Activated T-helper 1 cell treated with anti-CD3 and anti-CD28 coated beads, Interleukin-12 subunit alpha, Interleukin-12 subunit beta, Interleukin-2, Interleukin-4 antibody, amounts not matched to agents 30 ng/mL and 10 ng/mL and 1 ng/mL, durations not matched to agents 14 hours and 24 hours and 36 hours (primary cell): ENCODE measurements at regions of chr11 and their contacts with region 1.

Region 1: DNA sequence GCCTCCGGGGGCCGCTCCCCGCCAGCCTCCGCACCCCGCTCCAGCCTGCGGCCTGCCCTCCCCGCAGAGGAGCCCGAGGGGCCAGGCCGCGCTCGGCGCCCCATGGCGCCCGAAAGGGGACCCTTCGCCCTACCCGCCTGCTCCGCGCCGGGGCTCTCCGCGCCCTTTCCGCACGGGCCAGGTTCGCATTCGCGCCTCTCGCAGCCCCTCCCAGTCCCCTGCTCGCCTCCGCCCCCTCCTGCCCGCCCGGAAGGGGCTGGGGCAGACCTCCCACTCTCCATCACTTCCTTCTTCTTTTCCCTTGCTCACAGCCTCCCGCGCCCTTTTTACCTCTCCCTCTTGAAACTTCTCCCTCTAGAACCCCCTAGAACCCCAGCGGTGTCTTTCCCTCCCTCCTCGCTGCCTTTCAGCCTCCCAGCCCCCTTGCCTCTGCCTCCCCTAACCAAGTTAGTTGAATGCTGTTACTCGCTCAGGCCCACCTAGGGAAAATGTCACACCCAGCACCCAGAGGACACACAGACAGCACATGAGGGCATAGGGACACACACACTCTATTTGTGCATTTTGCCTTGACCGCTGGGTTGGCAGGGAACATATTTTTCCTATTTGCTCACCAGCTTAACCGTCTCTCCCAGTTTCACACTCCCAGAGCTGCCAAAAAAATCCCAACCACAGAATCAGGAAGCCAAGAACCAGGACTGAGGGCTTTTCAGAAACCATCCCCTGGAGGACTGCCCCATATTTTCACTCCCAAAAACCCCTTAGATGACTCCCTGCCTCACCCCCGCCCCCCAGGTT is at the start of gene SLC43A3:
- DNase-seq: peak; percentile 60
- H3K4me3 Mint-ChIP-seq: peak within 1 kb of the TSS; percentile 90
- H3K27ac Mint-ChIP-seq: peak within 1 kb of the TSS; percentile 80
- H3K4me1 Mint-ChIP-seq: peaks cover 56% of the 10 kb centered on the region
- H3K27me3 Mint-ChIP-seq: peaks cover 3% of the 10 kb centered on the region
- total RNA-seq, gene SLC43A3: 181 and 184 TPM in 2 replicates

Region 2: DNA sequence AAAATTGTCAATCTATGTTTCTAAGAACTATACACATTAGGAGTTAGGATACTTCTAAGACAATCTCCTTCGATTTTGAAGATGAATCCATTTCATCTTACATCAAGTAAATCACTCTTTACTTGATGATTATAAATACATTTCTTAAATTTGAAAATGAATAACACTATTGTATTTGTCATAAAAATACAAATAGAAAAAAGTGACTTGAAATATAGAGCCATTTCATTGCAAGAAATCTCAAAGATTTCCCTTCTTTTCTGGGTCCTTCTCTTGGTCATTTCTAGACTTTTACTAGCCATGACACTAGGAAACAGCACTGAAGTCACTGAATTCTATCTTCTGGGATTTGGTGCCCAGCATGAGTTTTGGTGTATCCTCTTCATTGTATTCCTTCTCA is 438.5 kb before region 1 on chr11 and contains the start of gene OR5AK2:
- intact Hi-C with region 1: no loop called
- DNase-seq: no peak
- H3K4me3 Mint-ChIP-seq: no peak within 1 kb of the TSS
- H3K27ac Mint-ChIP-seq: no peak within 1 kb of the TSS
- H3K4me1 Mint-ChIP-seq: no peaks in the 10 kb centered on the region
- H3K27me3 Mint-ChIP-seq: no peaks in the 10 kb centered on the region
- total RNA-seq, gene OR5AK2: not detected in 2 replicates

Region 3: GRCh38 chr11:57335343-57336110 is 91.6 kb before region 1 on chr11 and contains the start of gene SSRP1:
- intact Hi-C with region 1: loop called (anchors 2 kb)
- DNase-seq: peak; percentile 81
- H3K4me3 Mint-ChIP-seq: peak within 1 kb of the TSS; percentile 92
- H3K27ac Mint-ChIP-seq: peak within 1 kb of the TSS; percentile 99
- H3K4me1 Mint-ChIP-seq: peaks cover 39% of the 10 kb centered on the region
- H3K27me3 Mint-ChIP-seq: peaks cover 1% of the 10 kb centered on the region
- total RNA-seq, gene SSRP1: 235 and 239 TPM in 2 replicates

Region 4: GRCh38 chr11:57456960-57457642 is 30.0 kb after region 1 on chr11:
- intact Hi-C with region 1: loop called (anchors 1 kb)
- DNase-seq: peak; percentile 65
- H3K4me3 Mint-ChIP-seq: peak overlapping the region; percentile 72
- H3K27ac Mint-ChIP-seq: no peak overlapping the region
- H3K4me1 Mint-ChIP-seq: peaks cover 36% of the 10 kb centered on the region
- H3K27me3 Mint-ChIP-seq: peaks cover 53% of the 10 kb centered on the region

Region 5: DNA sequence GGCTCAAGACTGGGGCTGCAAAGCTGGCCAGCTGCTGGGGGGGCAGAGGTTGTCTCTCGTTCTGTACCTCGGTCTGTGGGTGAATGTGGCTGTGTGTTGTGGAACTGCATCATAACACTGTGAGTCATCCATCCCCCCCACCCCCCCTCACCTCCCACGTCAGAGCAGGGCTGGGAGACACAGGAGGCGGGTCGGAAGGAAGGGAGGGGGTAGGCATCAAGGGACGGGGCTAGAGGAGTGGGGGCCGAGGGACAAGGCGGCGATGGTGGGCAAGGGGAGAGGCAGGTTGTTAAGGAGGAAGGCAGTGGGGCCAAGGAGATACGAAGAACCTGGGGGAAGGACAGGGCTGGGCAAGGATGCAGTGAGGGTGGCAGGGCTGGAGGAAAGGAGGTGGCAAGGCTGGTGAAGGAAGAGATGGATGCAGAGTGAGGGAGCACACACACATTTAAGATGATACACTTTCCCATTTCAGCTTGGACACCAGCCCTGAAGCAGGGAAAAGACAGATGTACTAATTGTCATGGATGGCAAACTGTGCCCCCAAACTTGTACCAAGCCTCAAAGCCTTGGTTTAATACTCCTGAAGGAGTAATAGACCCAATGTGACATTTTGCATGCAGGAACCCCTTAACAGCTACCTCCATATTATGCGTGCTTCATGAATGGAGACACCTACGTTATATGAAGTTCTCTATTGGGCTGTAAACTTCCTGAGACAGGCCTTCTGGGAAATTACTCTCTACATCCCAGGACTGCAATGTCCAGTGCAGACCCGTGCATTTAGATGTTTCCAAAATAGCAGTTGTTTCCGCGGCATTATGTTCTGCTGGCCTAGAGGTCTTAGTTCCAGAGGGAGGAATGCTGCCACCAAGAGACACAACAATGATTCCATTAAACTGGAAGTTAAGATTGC is 223.0 kb after region 1 on chr11 and contains the start of gene YPEL4:
- intact Hi-C with region 1: loop called (anchors 2 kb)
- DNase-seq: peak; percentile 49
- H3K4me3 Mint-ChIP-seq: peak within 1 kb of the TSS; percentile 86
- H3K27ac Mint-ChIP-seq: peak within 1 kb of the TSS; percentile 55
- H3K4me1 Mint-ChIP-seq: peaks cover 41% of the 10 kb centered on the region
- H3K27me3 Mint-ChIP-seq: peaks cover 31% of the 10 kb centered on the region
- total RNA-seq, gene YPEL4: 0.26 and 0.39 TPM in 2 replicates

Region 6: GRCh38 chr11:58524232-58525036 is 1097.3 kb after region 1 on chr11:
- intact Hi-C with region 1: loop called (anchors 10 kb)
- DNase-seq: no peak
- H3K4me3 Mint-ChIP-seq: peak overlapping the region; percentile 74
- H3K27ac Mint-ChIP-seq: peak overlapping the region; percentile 77
- H3K4me1 Mint-ChIP-seq: peaks cover 36% of the 10 kb centered on the region
- H3K27me3 Mint-ChIP-seq: no peaks in the 10 kb centered on the region